ENCODE measurements at regions of chr2 and their contacts with region 1.

Region 1: DNA sequence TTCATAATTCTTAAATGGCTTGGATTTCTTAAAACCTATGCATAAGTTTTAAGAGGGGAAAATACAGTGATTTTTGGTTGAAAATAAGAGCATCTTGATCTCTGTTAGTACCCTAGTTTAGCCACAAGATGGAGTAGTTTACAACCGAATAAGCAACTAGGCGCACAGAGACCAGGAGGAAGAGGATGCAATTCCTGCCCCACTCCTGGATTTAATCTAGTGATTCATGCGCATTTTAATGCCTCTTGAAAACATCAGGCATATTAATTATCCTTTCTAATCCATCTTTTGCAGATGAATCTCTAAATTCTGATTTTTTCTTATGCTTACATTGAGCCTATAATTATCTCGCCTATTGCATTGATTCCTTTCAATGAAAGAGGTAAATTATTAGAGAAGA is 76.7 kb downstream of the MRPS9 start:
- DNase-seq: no peak
- ATAC-seq: no peak

Region 2: DNA sequence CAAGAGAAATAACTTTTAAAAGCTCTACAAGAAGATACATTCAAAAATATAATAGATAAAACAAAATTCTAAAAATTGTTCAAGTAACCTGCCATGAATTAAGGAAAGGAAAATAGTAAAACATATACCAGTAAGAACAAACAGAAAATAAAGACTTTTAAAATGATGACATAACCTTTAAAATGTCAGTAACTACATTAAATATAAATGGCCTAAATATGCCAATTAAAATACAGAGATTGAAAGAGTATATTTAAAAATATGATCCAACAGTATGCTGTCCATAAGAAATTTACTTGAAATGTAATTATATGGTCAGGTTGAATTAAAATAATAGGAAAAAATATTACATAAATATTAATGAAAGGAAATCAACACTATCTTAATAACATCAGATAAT is 1172.4 kb before region 1 on chr2:
- intact Hi-C with region 1: no loop called
- DNase-seq: no peak
- ATAC-seq: no peak

Region 3: GRCh38 chr2:105235388-105236054 is 121.0 kb after region 1 on chr2:
- intact Hi-C with region 1: loop called (anchors 10 kb)
- DNase-seq: peak; percentile 82
- ATAC-seq: peak; percentile 67

Region 4: DNA sequence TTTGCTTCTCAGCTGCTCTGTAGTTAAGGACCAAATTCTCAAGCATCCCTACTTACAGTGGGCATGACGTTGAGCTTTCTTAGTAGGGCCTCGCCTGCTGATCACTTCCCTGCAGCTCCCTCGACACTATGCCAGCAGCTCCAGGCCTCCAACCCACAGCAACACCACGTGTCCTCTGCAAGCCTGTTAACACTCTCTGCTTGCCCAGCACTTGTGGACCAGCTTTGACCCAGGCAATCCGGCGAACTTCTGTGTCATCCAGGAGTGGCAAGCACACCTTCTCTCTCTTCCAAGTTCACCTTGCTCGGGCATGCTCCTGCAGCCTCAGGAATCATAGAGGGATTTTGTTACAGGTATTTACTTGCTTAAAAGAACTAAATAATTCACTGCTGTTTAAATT is 422.9 kb after region 1 on chr2:
- intact Hi-C with region 1: no loop called
- DNase-seq: no peak
- ATAC-seq: no peak

Measured in sciatic nerve (tissue), 2 donors.